ENCODE measurements at regions of chr19 and their contacts with region 1.

Region 1: GRCh38 chr19:5839065-5840017 is at the start of gene FUT6:
- DNase-seq: no peak
- ATAC-seq: no peak
- H3K4me3 ChIP-seq: no peak within 1 kb of the TSS
- H3K27ac ChIP-seq: no peak within 1 kb of the TSS
- H3K4me1 ChIP-seq: no peaks in the 10 kb centered on the region
- H3K27me3 ChIP-seq: no peaks in the 10 kb centered on the region
- CTCF ChIP-seq: no peak
- POLR2A ChIP-seq: no peak
- total RNA-seq, gene FUT6: not detected

Region 2: GRCh38 chr19:5870986-5871394 is 31.6 kb after region 1 on chr19:
- intact Hi-C with region 1: loop called in 2 of 10 experiments (anchors 5 kb)
- DNase-seq: peak in 1 of 5 donors; percentile 68
- ATAC-seq: peak in 3 of 4 donors; percentile 60 to 84 (median 62)
- H3K4me3 ChIP-seq: no peak overlapping the region
- H3K27ac ChIP-seq: peak overlapping the region in 2 of 12 donors; percentile 20 to 43
- H3K4me1 ChIP-seq: no peaks in the 10 kb centered on the region
- H3K27me3 ChIP-seq: no peaks in the 10 kb centered on the region
- CTCF ChIP-seq: no peak
- POLR2A ChIP-seq: no peak